ENCODE measurements at regions of chr3 and their contacts with region 1.

Region 1: DNA sequence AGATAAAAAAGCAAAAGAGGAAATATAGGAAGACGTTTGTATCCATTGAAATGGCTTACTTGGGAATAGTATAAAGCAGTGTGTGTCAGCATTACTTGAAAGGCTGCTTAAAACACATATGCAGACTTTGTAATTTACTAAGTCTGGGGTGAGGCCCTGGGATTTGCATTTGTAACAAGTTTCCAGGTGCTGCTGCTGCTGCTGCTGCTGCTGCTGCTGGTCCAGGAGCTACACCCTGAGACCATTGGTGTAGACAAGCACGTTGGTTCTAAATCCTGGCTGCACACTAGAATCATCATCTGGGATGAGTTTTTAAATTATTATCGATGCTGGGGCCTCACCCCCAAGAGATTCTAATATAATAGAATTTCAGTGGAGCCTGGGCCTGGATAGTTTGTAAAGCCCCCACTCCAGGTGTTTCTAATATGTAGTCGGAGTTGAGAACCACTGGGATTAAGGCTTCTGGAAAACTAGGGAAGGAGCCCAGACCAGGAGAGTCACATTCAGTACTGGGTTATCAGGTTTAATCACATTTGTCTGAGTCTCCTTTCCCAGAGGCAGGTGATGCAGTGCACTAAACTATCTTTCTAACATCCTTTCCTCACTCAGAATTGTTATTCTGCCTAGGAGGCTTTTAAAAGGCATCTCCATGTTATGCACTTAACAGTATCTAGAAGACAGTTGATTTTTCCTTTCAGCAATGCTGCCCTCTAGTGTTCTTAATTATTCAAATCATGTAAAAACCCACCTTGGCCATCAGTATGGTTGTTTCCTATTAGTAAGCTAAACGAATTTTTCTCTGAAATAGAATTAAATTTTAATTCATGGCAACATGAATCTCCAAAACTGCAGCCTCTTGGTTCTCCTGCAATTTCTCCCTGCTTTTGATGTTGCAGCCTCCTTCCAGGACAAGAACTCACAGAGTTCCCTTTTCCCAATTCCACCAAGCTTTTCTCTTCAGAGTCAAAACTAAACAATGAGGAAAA is 45.4 kb downstream of the SSR3 start:
- DNase-seq: no peak
- ATAC-seq: peak; percentile 96
- H3K4me3 ChIP-seq: no peak overlapping the region
- H3K27ac ChIP-seq: no peak overlapping the region
- H3K4me1 ChIP-seq: no peaks in the 10 kb centered on the region
- H3K27me3 ChIP-seq: no peaks in the 10 kb centered on the region
- CTCF ChIP-seq: peak; percentile 36 to 70 (median 45); a peak in 4 of 6 replicates
- EP300 ChIP-seq: no peak
- POLR2A ChIP-seq: no peak
- RAD21 ChIP-seq: peak; percentile 86

Region 2: DNA sequence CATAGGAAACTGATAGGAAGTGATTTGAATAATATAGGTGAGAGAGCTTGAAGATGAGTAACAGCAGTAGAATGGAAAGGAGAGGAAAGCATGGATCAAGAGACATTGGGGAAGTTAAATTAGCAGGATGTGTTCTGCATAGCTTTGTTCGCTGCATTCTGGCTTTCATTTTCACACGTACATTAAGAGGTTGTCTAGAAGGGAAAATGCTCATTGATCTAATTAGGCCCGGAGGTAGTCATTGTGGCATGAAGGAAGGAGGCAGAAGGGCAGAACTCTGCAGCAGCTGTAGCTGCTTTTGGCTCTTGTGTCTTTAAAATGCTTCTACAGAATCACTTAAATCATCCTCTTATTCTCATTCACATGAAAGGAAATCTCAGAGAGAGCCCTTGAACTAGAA is 348.8 kb before region 1 on chr3:
- CTCF ChIA-PET with region 1: interaction called, 122 read pairs
- POLR2A ChIA-PET with region 1: no interaction called
- RAD21 ChIA-PET with region 1: no interaction called
- SMC1A ChIA-PET with region 1: interaction called, 5 read pairs
- in situ Hi-C with region 1: loop called (anchors 10 kb)
- intact Hi-C with region 1: no loop called
- DNase-seq: peak; percentile 23
- ATAC-seq: peak; percentile 94
- H3K4me3 ChIP-seq: no peak overlapping the region
- H3K27ac ChIP-seq: no peak overlapping the region
- H3K4me1 ChIP-seq: no peaks in the 10 kb centered on the region
- H3K27me3 ChIP-seq: no peaks in the 10 kb centered on the region
- CTCF ChIP-seq: no peak
- EP300 ChIP-seq: no peak
- POLR2A ChIP-seq: no peak
- RAD21 ChIP-seq: no peak

Region 3: GRCh38 chr3:156211583-156211982 is 297.9 kb before region 1 on chr3:
- CTCF ChIA-PET with region 1: no interaction called
- POLR2A ChIA-PET with region 1: no interaction called
- RAD21 ChIA-PET with region 1: no interaction called
- SMC1A ChIA-PET with region 1: no interaction called
- in situ Hi-C with region 1: no loop called
- intact Hi-C with region 1: no loop called
- DNase-seq: no peak
- ATAC-seq: no peak
- H3K4me3 ChIP-seq: no peak overlapping the region
- H3K27ac ChIP-seq: no peak overlapping the region
- H3K4me1 ChIP-seq: no peaks in the 10 kb centered on the region
- H3K27me3 ChIP-seq: peaks cover 0 to 2% of the 10 kb centered on the region in 2 experiments; a peak in 1 of 4 replicates
- CTCF ChIP-seq: no peak
- EP300 ChIP-seq: no peak
- POLR2A ChIP-seq: no peak
- RAD21 ChIP-seq: no peak

Region 4: DNA sequence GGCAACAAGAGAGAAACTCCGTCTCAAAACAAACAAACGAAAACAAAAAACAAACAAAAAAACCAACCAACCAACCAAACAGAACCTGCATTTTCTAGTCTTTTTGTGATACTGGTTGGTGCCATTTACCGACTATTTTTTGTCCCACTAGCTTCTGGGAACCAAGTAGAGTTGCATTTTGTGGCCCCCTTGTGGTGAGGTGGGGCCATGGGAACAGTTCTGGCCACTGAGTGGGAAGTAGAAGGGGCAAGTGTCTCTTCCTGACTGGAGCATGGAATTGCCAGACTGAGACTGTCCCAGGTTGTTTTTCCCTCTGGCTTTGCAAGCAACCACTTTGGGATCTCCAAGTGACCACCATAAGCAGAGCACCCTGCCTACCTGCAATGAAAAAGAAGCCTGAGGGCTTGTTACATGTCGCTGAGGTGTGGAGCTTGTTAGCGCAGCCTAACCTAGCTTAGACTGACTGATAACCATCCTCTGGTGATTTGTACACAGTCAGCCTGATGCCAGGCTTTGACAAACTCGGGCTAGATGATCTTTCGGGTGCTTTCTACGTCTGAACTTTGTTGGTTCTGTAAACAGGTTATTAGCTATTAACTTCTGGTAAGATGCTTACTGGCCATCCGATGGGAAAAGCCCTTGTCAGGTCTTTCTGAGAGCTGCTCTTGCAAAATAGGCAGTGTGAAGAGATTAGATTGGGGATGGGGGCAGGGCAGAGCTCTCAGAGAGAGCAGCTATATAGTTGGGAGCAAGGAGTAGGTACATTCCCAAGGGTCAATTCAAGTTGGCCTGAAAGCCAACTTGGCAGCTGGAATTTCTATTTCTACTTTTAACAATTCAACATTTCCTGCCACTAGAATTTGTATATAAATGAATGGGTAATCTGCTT is 126.8 kb before region 1 on chr3:
- CTCF ChIA-PET with region 1: interaction called, 17 read pairs
- POLR2A ChIA-PET with region 1: no interaction called
- RAD21 ChIA-PET with region 1: interaction called, 11 read pairs
- SMC1A ChIA-PET with region 1: interaction called, 36 read pairs
- in situ Hi-C with region 1: no loop called
- intact Hi-C with region 1: loop called (anchors 1 kb)
- DNase-seq: no peak
- ATAC-seq: peak; percentile 93
- H3K4me3 ChIP-seq: no peak overlapping the region
- H3K27ac ChIP-seq: no peak overlapping the region
- H3K4me1 ChIP-seq: no peaks in the 10 kb centered on the region
- H3K27me3 ChIP-seq: peaks cover 0 to 2% of the 10 kb centered on the region in 2 experiments; a peak in 2 of 4 replicates
- CTCF ChIP-seq: peak; percentile 72 to 81 (median 80)
- EP300 ChIP-seq: no peak
- POLR2A ChIP-seq: no peak
- RAD21 ChIP-seq: peak; percentile 83

Region 5: GRCh38 chr3:156456771-156457224 is 52.7 kb before region 1 on chr3:
- CTCF ChIA-PET with region 1: interaction called, 59 read pairs
- POLR2A ChIA-PET with region 1: no interaction called
- RAD21 ChIA-PET with region 1: interaction called, 6 read pairs
- SMC1A ChIA-PET with region 1: interaction called, 6 read pairs
- in situ Hi-C with region 1: no loop called
- intact Hi-C with region 1: no loop called
- DNase-seq: no peak
- ATAC-seq: no peak
- H3K4me3 ChIP-seq: no peak overlapping the region
- H3K27ac ChIP-seq: no peak overlapping the region
- H3K4me1 ChIP-seq: peaks cover 6% of the 10 kb centered on the region; the same call in 1 of the 2 replicates
- H3K27me3 ChIP-seq: no peaks in the 10 kb centered on the region; a peak in 1 of 4 replicates
- CTCF ChIP-seq: no peak
- EP300 ChIP-seq: no peak
- POLR2A ChIP-seq: no peak
- RAD21 ChIP-seq: no peak

Region 6: GRCh38 chr3:156483961-156484787 is 25.3 kb before region 1 on chr3:
- CTCF ChIA-PET with region 1: interaction called, 58 read pairs
- POLR2A ChIA-PET with region 1: interaction called, 3 read pairs
- RAD21 ChIA-PET with region 1: interaction called, 20 read pairs
- SMC1A ChIA-PET with region 1: interaction called, 72 read pairs
- in situ Hi-C with region 1: no loop called
- intact Hi-C with region 1: no loop called
- DNase-seq: peak; percentile 77
- ATAC-seq: peak; percentile 92
- H3K4me3 ChIP-seq: peak overlapping the region; percentile 67
- H3K27ac ChIP-seq: peak overlapping the region; percentile 89
- H3K4me1 ChIP-seq: peaks cover 15% of the 10 kb centered on the region
- H3K27me3 ChIP-seq: no peaks in the 10 kb centered on the region
- CTCF ChIP-seq: no peak
- EP300 ChIP-seq: peak in 1 of 2 experiments; percentile 38; a peak in 3 of 4 replicates
- POLR2A ChIP-seq: no peak
- RAD21 ChIP-seq: no peak

Region 7: DNA sequence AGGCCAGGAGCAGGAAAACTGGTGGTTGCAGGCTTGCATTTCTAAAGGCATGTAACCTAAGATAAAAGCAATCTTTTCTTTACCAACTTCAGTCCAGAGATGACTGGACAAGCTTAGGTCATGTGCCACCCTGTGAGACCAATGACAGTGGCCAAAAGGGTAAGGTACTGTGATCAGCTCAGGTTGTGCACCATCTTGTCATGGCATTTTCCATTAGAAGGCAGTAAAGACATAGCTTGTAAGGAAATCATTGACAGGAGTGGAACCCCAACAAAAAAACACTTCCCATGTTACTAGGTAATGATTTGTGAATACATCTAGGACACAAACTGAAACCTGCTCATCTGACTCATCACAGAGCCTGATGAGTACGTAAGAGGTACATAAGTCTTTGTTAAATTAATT is 10.3 kb after region 1 on chr3:
- CTCF ChIA-PET with region 1: interaction called, 12 read pairs
- POLR2A ChIA-PET with region 1: no interaction called
- RAD21 ChIA-PET with region 1: interaction called, 4 read pairs
- SMC1A ChIA-PET with region 1: interaction called, 12 read pairs
- in situ Hi-C with region 1: no loop called
- intact Hi-C with region 1: no loop called
- DNase-seq: peak; percentile 27
- ATAC-seq: peak; percentile 84
- H3K4me3 ChIP-seq: no peak overlapping the region
- H3K27ac ChIP-seq: no peak overlapping the region
- H3K4me1 ChIP-seq: no peaks in the 10 kb centered on the region
- H3K27me3 ChIP-seq: no peaks in the 10 kb centered on the region
- CTCF ChIP-seq: no peak
- EP300 ChIP-seq: no peak
- POLR2A ChIP-seq: no peak
- RAD21 ChIP-seq: no peak

Measured in GM12878 (cell line).